ENCODE measurements at regions of chr12 and their contacts with region 1.

Region 1: DNA sequence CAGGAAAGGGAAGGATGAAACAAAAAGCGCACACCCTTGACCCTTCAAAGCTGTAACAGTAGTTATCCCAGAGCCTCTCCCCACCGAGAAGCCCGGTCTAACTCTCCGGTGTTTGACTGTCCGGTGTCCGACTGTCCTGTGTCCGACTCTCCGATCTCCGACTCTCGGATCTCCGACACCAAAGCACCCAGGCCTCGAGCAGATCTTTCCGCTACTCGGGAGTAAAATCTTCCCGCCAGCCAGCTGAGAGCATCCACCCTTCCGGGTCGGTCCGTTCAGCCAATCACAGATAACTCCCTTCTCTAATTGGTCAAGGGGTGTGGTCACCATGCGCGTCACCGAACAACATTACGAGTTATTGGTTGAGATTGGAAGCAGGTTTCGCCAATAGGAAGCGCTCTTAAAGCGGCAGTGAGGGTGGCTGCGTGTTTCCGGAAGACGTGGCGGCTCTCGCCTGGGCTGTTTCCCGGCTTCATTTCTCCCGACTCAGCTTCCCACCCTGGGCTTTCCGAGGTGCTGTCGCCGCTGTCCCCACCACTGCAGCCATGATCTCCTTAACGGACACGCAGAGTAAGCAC is at the starts of genes GOLT1B and RECQL:
- DNase-seq: peak; percentile 99
- ATAC-seq: peak; percentile 96
- H3K4me3 ChIP-seq: peak within 1 kb of the TSS; percentile 60
- H3K27ac ChIP-seq: peak within 1 kb of the TSS; percentile 69
- H3K4me1 ChIP-seq: peaks cover 2% of the 10 kb centered on the region
- H3K27me3 ChIP-seq: no peaks in the 10 kb centered on the region
- CTCF ChIP-seq: no peak
- POLR2A ChIP-seq: peak; percentile 93
- RAD21 ChIP-seq: no peak
- total RNA-seq, gene GOLT1B: 50.5 and 83.9 TPM in 2 replicates
- total RNA-seq, gene RECQL: 67.0 and 118 TPM in 2 replicates

Region 2: DNA sequence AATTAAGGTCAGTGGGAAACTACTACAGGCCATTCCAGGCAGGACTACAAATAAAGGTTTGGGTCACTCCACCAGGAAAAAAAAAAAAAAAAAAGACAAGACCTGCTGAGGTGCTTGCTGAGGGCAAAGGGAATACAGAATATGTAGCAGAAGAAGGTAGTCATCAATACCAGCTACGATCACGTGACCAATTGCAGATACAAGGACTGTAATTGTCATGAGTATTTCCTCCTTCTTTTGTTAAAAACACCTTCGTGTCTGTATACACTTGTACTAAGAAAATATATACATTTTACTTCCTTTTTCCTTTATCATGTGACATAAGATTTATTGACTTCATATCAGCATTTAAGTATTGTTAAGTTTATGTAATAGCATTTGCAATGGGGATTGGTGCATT is 84.0 kb after region 1 on chr12:
- CTCF ChIA-PET with region 1: no interaction called
- POLR2A ChIA-PET with region 1: no interaction called
- dilution Hi-C with region 1: no loop called
- in situ Hi-C with region 1: no loop called
- intact Hi-C with region 1: no loop called
- DNase-seq: no peak
- ATAC-seq: no peak
- H3K4me3 ChIP-seq: no peak overlapping the region
- H3K27ac ChIP-seq: no peak overlapping the region
- H3K4me1 ChIP-seq: no peaks in the 10 kb centered on the region
- H3K27me3 ChIP-seq: no peaks in the 10 kb centered on the region
- CTCF ChIP-seq: no peak
- POLR2A ChIP-seq: no peak
- RAD21 ChIP-seq: no peak

Region 3: GRCh38 chr12:21642707-21643389 is 141.4 kb after region 1 on chr12:
- CTCF ChIA-PET with region 1: no interaction called
- POLR2A ChIA-PET with region 1: no interaction called
- dilution Hi-C with region 1: no loop called
- in situ Hi-C with region 1: loop called (anchors 10 kb)
- intact Hi-C with region 1: no loop called
- DNase-seq: peak; percentile 31
- ATAC-seq: no peak
- H3K4me3 ChIP-seq: no peak overlapping the region
- H3K27ac ChIP-seq: no peak overlapping the region
- H3K4me1 ChIP-seq: no peaks in the 10 kb centered on the region; the same call in none of the 2 replicates
- H3K27me3 ChIP-seq: no peaks in the 10 kb centered on the region
- CTCF ChIP-seq: no peak
- POLR2A ChIP-seq: no peak
- RAD21 ChIP-seq: no peak

Region 4: GRCh38 chr12:21710948-21711775 is 209.7 kb after region 1 on chr12:
- CTCF ChIA-PET with region 1: no interaction called
- POLR2A ChIA-PET with region 1: no interaction called
- dilution Hi-C with region 1: no loop called
- in situ Hi-C with region 1: no loop called
- intact Hi-C with region 1: no loop called
- DNase-seq: no peak
- ATAC-seq: no peak
- H3K4me3 ChIP-seq: no peak overlapping the region
- H3K27ac ChIP-seq: no peak overlapping the region
- H3K4me1 ChIP-seq: no peaks in the 10 kb centered on the region
- H3K27me3 ChIP-seq: no peaks in the 10 kb centered on the region
- CTCF ChIP-seq: no peak
- POLR2A ChIP-seq: no peak
- RAD21 ChIP-seq: no peak

Measured in IMR-90 (cell line).